ENCODE measurements at regions of chr21 and their contacts with region 1.

Region 1: GRCh38 chr21:31443736-31444521 is 99.9 kb upstream of the TIAM1 start:
- DNase-seq: peak in 4 of 14 experiments; percentile 13 to 35 (median 21)
- ATAC-seq: no peak
- H3K4me3 ChIP-seq: no peak overlapping the region
- H3K4me3 Mint-ChIP-seq: peak overlapping the region; percentile 54
- H3K27ac ChIP-seq: no peak overlapping the region
- H3K27ac Mint-ChIP-seq: no peak overlapping the region
- H3K4me1 ChIP-seq: peaks cover 31% of the 10 kb centered on the region
- H3K4me1 Mint-ChIP-seq: peaks cover 53% of the 10 kb centered on the region
- H3K27me3 ChIP-seq: no peaks in the 10 kb centered on the region
- H3K27me3 Mint-ChIP-seq: no peaks in the 10 kb centered on the region
- CTCF ChIP-seq: no peak

Region 2: DNA sequence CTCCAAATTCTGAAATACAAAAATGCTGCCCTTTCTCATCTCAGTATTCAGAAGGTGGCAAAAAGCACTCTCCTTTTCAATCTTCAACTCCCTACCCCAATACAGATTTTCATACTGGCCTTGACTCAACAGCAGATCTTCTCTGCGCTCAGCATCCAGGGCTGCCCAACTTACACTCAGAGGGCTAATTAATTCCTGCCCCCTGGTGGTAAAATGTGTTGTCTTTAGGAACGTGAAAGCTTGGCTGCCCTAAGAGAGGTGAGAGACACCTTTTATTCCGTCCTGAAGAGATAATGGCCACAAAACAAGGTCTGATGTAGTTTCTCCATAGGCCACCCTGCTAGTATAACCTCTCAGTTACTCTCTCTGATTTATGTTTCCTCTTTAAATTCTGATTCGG is 1186.2 kb before region 1 on chr21:
- CTCF ChIA-PET with region 1: no interaction called
- POLR2A ChIA-PET with region 1: no interaction called
- intact Hi-C with region 1: no loop called
- DNase-seq: no peak
- ATAC-seq: no peak
- H3K4me3 ChIP-seq: no peak overlapping the region
- H3K4me3 Mint-ChIP-seq: no peak overlapping the region
- H3K27ac ChIP-seq: no peak overlapping the region
- H3K27ac Mint-ChIP-seq: no peak overlapping the region
- H3K4me1 ChIP-seq: no peaks in the 10 kb centered on the region
- H3K4me1 Mint-ChIP-seq: no peaks in the 10 kb centered on the region
- H3K27me3 ChIP-seq: no peaks in the 10 kb centered on the region
- H3K27me3 Mint-ChIP-seq: no peaks in the 10 kb centered on the region
- CTCF ChIP-seq: no peak

Region 3: GRCh38 chr21:31397515-31397926 is 46.4 kb before region 1 on chr21:
- CTCF ChIA-PET with region 1: no interaction called
- POLR2A ChIA-PET with region 1: interaction called, 4 read pairs
- intact Hi-C with region 1: loop called in 1 of 2 experiments (anchors 10 kb)
- DNase-seq: no peak
- ATAC-seq: peak; percentile 8
- H3K4me3 ChIP-seq: no peak overlapping the region
- H3K4me3 Mint-ChIP-seq: peak overlapping the region; percentile 70
- H3K27ac ChIP-seq: no peak overlapping the region
- H3K27ac Mint-ChIP-seq: peak overlapping the region; percentile 90
- H3K4me1 ChIP-seq: peaks cover 36% of the 10 kb centered on the region
- H3K4me1 Mint-ChIP-seq: peaks cover 58% of the 10 kb centered on the region
- H3K27me3 ChIP-seq: no peaks in the 10 kb centered on the region
- H3K27me3 Mint-ChIP-seq: no peaks in the 10 kb centered on the region
- CTCF ChIP-seq: no peak

Region 4: DNA sequence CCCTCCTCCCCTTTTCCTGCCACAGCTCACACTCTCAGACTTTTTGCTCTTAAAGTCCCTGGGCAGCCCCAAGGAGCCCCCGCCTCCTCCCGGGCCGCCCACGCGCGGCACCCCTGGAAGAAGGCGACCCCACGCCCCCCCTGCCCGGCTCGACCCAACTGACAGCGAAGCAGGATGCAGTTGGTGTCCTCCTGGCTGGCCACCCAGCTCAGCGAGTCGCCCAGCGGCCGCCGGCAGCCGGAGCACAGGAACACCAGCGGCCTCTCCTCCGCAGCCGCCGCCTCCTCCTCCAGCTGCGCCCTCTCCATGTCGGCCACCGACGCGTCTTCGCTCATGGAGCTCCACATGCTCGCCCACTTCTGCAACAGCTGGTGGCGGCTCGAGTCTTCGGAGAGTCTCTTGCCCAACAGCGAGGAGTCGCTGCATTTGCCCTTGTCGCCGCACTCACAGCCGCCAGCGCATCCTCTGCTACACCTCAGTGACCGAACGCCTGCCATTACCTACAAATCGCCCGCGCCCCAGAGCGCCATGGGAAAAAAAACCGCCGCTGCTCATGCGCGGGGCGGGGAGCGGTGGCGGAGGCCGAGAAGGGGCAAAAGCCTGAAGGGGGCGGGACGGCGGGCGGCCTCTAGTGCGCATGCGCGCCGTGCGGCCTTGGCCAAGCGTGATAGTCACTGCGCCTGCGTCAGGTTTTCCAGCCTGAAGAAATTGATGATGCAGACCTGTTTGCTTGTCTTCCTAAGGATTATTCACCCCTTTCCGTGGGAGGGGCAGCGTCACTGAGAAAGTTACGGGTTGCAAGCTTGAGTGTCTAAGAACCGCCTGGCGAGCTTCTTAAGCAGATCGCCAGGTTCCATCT is 834.8 kb after region 1 on chr21 and contains the start of gene MIS18A:
- CTCF ChIA-PET with region 1: no interaction called
- POLR2A ChIA-PET with region 1: no interaction called
- intact Hi-C with region 1: no loop called
- DNase-seq: peak; percentile 92 to 99 (median 97)
- ATAC-seq: peak; percentile 94
- H3K4me3 ChIP-seq: peak within 1 kb of the TSS; percentile 94
- H3K4me3 Mint-ChIP-seq: peak within 1 kb of the TSS; percentile 99
- H3K27ac ChIP-seq: peak within 1 kb of the TSS in 1 of 2 donors; percentile 26
- H3K27ac Mint-ChIP-seq: peak within 1 kb of the TSS; percentile 94
- H3K4me1 ChIP-seq: peaks cover 20% of the 10 kb centered on the region
- H3K4me1 Mint-ChIP-seq: peaks cover 29% of the 10 kb centered on the region
- H3K27me3 ChIP-seq: no peaks in the 10 kb centered on the region
- H3K27me3 Mint-ChIP-seq: no peaks in the 10 kb centered on the region
- CTCF ChIP-seq: no peak
- total RNA-seq, gene MIS18A: 2.7 to 3.0 TPM